Spleen (tissue), 13 donors: ENCODE measurements at regions of chr1 and their contacts with region 1.

Region 1: GRCh38 chr1:112803906-112804762 is 89.0 kb upstream of the PPM1J start:
- DNase-seq: peak; percentile 86
- H3K4me3 ChIP-seq: no peak overlapping the region
- H3K27ac ChIP-seq: no peak overlapping the region
- H3K4me1 ChIP-seq: peaks cover 0 to under 1% (median 0%) of the 10 kb centered on the region in 6 donors
- H3K27me3 ChIP-seq: peaks cover 0 to 8% (median 0%) of the 10 kb centered on the region in 7 donors
- CTCF ChIP-seq: peak; percentile 26 to 77 (median 61)
- POLR2A ChIP-seq: no peak

Region 2: GRCh38 chr1:112196731-112197130 is 607.4 kb before region 1 on chr1:
- intact Hi-C with region 1: no loop called
- DNase-seq: no peak
- H3K4me3 ChIP-seq: no peak overlapping the region
- H3K27ac ChIP-seq: no peak overlapping the region
- H3K4me1 ChIP-seq: no peaks in the 10 kb centered on the region
- H3K27me3 ChIP-seq: peaks cover 0 to 2% (median 0%) of the 10 kb centered on the region in 7 donors
- CTCF ChIP-seq: no peak
- POLR2A ChIP-seq: no peak

Region 3: GRCh38 chr1:112715264-112716053 is 88.7 kb before region 1 on chr1 and contains the start of gene PPM1J:
- intact Hi-C with region 1: loop called (anchors 5 kb)
- DNase-seq: peak; percentile 100
- H3K4me3 ChIP-seq: peak within 1 kb of the TSS; percentile 42 to 76 (median 61)
- H3K27ac ChIP-seq: peak within 1 kb of the TSS; percentile 5 to 78 (median 72)
- H3K4me1 ChIP-seq: peaks cover 13 to 54% (median 37%) of the 10 kb centered on the region in 6 donors
- H3K27me3 ChIP-seq: peaks cover 0 to 30% (median 0%) of the 10 kb centered on the region in 7 donors
- CTCF ChIP-seq: peak in 4 of 11 experiments; percentile 4 to 22 (median 16)
- POLR2A ChIP-seq: peak in 1 of 3 donors; percentile 39
- total RNA-seq, gene PPM1J: 0.51 to 1.8 (median 1.3) TPM